Activated CD4-positive, alpha-beta T cell treated with anti-CD3 and anti-CD28 coated beads, Interleukin-2, amount 10 ng/mL, durations not matched to agents 24 days and 14 days (primary cell): ENCODE measurements at regions of chr2 and their contacts with region 1.

Region 1: DNA sequence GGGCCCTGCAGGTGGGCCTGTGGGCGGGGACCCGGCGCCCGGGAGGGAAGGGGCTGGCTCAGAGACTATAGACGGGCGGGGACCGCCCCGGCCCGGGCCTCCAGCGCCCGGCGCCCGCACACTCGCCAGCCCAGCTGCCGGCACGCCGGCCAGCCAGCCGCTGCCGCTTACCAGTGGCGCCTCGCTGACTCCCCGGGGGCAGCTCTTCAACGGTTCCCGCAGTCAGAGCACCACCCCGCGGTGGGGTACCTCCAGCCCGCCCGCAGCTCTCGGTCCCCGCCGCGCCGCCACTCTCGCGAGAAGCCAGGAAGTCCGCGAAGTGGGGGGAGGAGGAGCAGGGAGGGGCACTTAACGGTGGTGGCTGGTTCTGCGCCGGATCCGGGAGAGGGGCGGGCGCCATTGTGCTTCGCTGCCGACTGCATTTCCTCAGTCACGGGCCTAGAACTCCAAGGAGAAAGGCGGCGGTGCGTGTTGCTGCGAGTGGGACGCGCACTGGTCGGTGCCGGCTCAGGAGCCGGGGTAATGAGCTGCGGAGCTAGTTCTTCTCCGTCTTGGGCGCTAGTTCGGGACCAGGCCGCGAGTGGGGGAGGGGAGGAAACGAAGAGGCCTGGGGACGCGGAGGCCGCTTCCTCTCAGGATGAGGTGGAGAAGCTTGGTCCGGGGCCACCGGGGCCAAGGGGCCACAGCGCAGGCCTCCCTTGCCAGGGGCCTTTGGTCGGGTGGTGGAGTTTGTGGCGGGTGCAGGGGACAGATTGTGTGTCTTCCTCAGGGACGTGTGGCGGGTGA is at the start of gene MARCHF7:
- DNase-seq: peak; percentile 99
- H3K4me3 Mint-ChIP-seq: peak within 1 kb of the TSS; percentile 100
- H3K27ac Mint-ChIP-seq: peak within 1 kb of the TSS; percentile 100
- H3K4me1 Mint-ChIP-seq: peaks cover 32% of the 10 kb centered on the region
- H3K27me3 Mint-ChIP-seq: no peaks in the 10 kb centered on the region
- total RNA-seq, gene MARCHF7: 67.1 and 72.0 TPM in 2 replicates

Region 2: DNA sequence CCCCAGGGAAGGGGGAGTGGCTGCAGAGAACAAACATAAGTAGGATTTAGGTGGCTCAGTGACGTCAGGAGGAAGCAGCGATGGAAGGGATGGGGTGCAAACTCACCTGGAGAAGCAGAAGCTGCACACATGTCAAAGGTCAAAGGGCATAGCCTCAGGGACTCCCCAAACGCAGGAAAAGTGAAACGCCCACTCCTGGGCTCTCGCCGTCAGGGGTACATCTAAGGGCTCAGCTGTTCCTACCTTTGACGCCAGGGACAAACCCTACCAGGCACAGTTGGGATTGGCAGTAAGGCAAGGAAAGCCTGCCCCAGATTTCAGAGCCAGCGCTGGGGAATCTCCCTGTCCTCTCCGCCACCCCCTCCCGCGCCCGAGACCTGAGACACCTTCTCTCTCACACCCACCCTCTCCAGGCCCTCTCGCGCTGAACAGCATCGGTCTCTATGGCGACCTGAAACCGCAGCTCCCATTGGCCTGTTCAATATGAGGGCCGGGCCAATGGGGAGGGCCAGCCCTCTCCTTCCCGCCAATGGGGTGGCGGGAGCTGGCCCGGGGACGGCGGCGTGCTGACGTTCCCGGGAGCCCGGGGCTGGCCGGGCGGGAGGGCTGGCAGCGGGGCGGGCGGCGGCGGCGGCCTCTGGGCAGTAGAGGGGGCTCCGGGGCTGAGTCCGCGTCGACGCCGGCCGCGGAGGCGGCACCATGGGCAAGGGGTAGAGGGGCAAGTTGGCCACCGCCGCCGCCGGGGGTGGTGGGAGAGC is 1255.8 kb before region 1 on chr2 and contains the starts of genes CCDC148 and PKP4:
- intact Hi-C with region 1: loop called (anchors 5 kb)
- DNase-seq: peak; percentile 97
- H3K4me3 Mint-ChIP-seq: peak within 1 kb of the TSS; percentile 91
- H3K27ac Mint-ChIP-seq: peak within 1 kb of the TSS; percentile 94
- H3K4me1 Mint-ChIP-seq: peaks cover 19% of the 10 kb centered on the region
- H3K27me3 Mint-ChIP-seq: peaks cover 42% of the 10 kb centered on the region
- total RNA-seq, gene CCDC148: not detected in 2 replicates
- total RNA-seq, gene PKP4: 31.5 and 32.6 TPM in 2 replicates

Region 3: GRCh38 chr2:159516241-159516766 is 196.0 kb before region 1 on chr2:
- intact Hi-C with region 1: loop called (anchors 2 kb)
- DNase-seq: peak; percentile 63
- H3K4me3 Mint-ChIP-seq: peak overlapping the region; percentile 68
- H3K27ac Mint-ChIP-seq: peak overlapping the region; percentile 72
- H3K4me1 Mint-ChIP-seq: peaks cover 2% of the 10 kb centered on the region
- H3K27me3 Mint-ChIP-seq: no peaks in the 10 kb centered on the region

Region 4: GRCh38 chr2:159728629-159729028 is 16.3 kb after region 1 on chr2:
- intact Hi-C with region 1: loop called (anchors 1 kb)
- DNase-seq: no peak
- H3K4me3 Mint-ChIP-seq: no peak overlapping the region
- H3K27ac Mint-ChIP-seq: no peak overlapping the region
- H3K4me1 Mint-ChIP-seq: peaks cover 27% of the 10 kb centered on the region
- H3K27me3 Mint-ChIP-seq: no peaks in the 10 kb centered on the region

Region 5: DNA sequence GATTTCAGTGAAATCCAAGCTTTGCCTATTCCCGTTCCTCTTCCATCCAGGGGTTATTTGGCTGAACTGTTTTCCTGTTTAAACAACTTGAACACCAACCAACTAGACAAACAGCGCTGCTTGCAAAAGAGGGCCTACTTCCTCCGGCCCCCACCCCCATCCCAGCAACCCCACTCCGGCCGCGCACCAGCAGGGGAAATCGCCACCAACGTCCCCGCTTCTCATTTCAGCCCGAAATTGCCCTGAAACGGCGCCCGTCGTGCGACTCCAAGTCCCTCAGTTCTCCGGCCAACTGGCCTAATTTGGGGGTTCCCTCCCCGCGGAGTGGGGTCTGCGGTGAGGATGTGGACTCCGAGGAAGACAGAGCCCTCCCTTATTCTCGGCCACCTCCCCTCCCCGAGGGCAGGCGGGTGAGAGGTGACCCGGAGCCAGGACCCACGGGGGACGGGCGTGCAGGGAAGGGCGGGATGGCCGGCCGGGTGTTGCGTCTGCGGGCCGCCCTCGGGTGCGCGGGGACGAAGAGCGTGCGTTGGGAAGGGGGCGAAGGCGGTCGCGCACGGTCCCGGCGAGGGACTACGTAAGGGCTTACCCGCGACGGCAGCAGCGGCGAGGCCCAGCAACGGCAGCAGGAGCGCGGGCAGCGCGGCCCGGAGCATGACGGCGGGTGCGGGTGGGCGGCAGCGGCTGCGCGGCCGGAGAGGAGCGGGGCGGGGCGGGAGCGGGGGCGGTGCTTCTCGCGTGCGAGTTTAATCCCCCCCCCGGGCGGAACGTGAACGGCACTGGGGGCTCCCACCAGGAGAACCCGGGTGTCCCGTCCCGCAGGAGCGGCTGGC is 85.4 kb after region 1 on chr2 and contains the start of gene CD302:
- intact Hi-C with region 1: loop called (anchors 5 kb)
- DNase-seq: peak; percentile 68
- H3K4me3 Mint-ChIP-seq: peak within 1 kb of the TSS; percentile 70
- H3K27ac Mint-ChIP-seq: no peak within 1 kb of the TSS
- H3K4me1 Mint-ChIP-seq: peaks cover 6% of the 10 kb centered on the region
- H3K27me3 Mint-ChIP-seq: peaks cover 53% of the 10 kb centered on the region
- total RNA-seq, gene CD302: 0.54 and 0.72 TPM in 2 replicates